Prostate gland (tissue), 2 donors: ENCODE measurements at regions of chr12 and their contacts with region 1.

Region 1: GRCh38 chr12:6326336-6326838 is 15.5 kb downstream of the TNFRSF1A start:
- DNase-seq: no peak
- H3K4me3 ChIP-seq: no peak overlapping the region
- H3K27ac ChIP-seq: peak overlapping the region; percentile 29 to 61
- H3K4me1 ChIP-seq: peaks cover 18% of the 10 kb centered on the region
- H3K27me3 ChIP-seq: no peaks in the 10 kb centered on the region
- CTCF ChIP-seq: peak in 3 of 4 experiments; percentile 36 to 55 (median 46)
- POLR2A ChIP-seq: no peak

Region 2: DNA sequence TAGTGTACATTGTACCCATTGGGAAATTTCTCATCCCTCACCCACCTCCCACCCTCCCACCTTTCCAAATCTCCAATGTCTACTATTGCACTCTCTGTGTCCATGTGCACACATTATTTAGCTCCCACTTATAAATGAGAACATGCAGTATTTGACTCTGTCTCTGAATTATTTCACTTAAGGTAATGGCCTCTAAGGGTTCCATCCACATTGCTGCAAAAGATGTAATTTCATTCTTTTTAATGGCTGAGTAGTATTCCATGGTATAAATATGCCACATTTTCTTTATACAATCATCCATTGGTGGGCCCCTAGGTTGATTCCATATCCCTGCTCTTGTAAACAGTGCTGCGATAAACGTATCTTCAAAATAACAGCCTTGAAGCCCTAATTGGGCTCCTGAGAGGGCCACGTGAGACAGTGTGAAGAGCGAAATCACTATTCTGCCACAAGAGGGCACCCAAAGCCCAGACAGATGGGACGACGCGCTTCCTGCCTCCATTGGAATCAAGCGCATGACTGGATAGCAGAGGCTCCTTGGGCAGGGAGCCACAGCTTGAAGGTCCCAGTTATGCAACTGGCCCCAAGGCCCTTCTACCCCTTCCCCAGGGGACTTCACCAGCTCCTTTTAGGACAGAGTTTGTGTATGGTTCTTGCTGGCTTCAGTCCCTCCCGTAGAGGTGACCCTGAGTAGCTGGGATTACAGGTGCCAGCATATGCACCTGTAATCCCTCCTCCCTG is 97.0 kb after region 1 on chr12:
- intact Hi-C with region 1: loop called (anchors 5 kb)
- DNase-seq: peak; percentile 86
- H3K4me3 ChIP-seq: no peak overlapping the region
- H3K27ac ChIP-seq: no peak overlapping the region
- H3K4me1 ChIP-seq: no peaks in the 10 kb centered on the region
- H3K27me3 ChIP-seq: no peaks in the 10 kb centered on the region
- CTCF ChIP-seq: peak; percentile 80 to 94 (median 92)
- POLR2A ChIP-seq: no peak

Region 3: DNA sequence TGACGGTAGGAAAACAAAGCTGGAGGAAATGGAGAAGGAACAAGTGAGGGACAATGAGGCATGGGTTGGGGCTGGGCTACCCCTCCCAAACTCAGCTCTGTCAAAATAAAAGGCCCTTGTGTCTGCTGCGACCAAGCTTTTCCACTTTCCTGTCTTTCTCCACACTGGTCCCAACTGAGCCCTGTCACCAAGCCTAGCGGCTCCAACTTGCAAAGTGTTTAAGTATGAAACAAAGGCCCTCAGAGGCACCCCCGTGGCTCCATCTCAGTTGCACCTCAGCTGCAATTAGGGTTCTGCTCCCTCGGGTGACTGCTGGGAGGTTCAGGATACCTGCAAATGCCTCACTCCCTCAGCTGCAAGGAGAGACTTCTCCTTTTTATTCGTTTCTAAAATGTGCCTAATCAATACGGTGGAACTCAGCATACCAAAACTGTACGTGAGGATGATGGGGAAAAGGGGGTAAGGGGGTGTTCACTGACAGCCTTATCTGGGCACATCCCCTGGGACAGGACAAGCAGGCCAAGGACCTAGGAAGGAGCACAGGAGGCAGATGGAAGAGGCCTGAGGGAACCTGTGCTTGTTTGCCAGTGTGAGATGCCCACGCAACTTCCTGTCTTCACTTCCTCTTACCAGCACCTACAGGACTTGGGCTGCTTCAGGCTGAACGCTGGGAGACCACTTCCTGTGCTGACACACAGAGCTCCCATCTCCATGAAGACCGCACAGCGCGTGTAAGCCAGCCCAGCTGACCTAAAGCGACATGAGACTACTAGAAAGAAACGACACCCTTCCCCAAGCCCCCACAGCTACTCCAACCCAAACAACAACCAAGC is 135.2 kb after region 1 on chr12:
- intact Hi-C with region 1: loop called (anchors 2 kb)
- DNase-seq: peak; percentile 24
- H3K4me3 ChIP-seq: no peak overlapping the region
- H3K27ac ChIP-seq: peak overlapping the region in 1 of 2 donors; percentile 10
- H3K4me1 ChIP-seq: no peaks in the 10 kb centered on the region
- H3K27me3 ChIP-seq: no peaks in the 10 kb centered on the region
- CTCF ChIP-seq: no peak
- POLR2A ChIP-seq: no peak